Right ventricle myocardium inferior (tissue), 1 donor: ENCODE measurements at regions of chr7 and their contacts with region 1.

Region 1: GRCh38 chr7:102912742-102913141 is at the start of gene LRRC17:
- DNase-seq: no peak
- ATAC-seq: peak; percentile 27
- total RNA-seq, gene LRRC17: 2.1 TPM

Region 2: DNA sequence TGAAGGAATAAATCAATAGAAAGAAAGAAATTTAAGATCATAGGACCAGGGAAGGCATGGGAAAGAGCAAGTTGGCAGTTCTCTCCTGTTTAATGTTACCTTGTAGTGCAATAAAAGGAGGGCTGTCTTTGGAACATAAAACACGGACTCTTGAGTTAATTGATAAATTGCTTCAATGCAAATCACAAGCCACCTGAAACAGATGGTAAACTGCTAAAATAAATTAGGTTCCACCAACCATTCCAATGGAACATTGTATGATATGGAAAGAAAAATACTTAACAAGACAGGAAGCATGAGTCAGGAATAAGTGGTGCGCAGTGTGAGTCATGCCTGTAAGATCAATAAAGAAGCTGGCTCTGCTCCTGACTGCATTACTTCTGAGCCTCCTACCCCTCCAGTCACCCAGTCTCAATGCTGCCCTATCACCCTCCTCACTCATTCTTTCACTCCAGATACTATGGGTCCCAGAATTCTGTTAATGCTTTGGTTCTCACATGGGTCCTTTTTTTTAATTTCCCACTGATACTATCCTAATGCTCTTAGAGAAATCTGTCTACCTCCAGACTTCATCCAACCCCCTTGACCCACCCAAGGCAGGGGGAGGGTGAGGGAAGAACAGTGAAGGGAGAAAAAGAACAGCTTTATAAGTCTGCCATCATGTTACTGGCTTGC is 78.9 kb after region 1 on chr7:
- intact Hi-C with region 1: loop called (anchors 10 kb)
- DNase-seq: no peak
- ATAC-seq: no peak

Region 3: DNA sequence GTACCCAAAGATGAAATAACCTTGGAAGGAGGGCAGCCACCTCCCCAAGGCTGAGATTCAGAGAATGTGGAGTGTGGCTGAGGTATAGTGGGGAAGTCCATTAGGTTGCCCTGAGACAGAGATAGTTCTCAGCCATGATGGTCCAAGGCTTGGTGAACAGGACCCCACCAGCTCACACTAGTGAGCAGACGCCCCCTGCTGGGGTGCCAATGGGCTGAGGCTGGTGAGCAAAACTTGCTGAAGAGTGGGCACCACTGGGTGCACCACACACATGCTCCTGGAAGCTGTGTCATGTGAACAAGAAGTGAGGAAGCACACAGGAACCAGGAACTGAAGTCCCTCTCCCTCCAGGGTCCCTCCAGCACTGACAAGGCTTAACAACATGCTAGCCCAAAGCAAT is 152.9 kb after region 1 on chr7:
- intact Hi-C with region 1: loop called (anchors 10 kb)
- DNase-seq: no peak
- ATAC-seq: no peak